Vagina (tissue), 2 donors: ENCODE measurements at regions of chr3 and their contacts with region 1.

Region 1: DNA sequence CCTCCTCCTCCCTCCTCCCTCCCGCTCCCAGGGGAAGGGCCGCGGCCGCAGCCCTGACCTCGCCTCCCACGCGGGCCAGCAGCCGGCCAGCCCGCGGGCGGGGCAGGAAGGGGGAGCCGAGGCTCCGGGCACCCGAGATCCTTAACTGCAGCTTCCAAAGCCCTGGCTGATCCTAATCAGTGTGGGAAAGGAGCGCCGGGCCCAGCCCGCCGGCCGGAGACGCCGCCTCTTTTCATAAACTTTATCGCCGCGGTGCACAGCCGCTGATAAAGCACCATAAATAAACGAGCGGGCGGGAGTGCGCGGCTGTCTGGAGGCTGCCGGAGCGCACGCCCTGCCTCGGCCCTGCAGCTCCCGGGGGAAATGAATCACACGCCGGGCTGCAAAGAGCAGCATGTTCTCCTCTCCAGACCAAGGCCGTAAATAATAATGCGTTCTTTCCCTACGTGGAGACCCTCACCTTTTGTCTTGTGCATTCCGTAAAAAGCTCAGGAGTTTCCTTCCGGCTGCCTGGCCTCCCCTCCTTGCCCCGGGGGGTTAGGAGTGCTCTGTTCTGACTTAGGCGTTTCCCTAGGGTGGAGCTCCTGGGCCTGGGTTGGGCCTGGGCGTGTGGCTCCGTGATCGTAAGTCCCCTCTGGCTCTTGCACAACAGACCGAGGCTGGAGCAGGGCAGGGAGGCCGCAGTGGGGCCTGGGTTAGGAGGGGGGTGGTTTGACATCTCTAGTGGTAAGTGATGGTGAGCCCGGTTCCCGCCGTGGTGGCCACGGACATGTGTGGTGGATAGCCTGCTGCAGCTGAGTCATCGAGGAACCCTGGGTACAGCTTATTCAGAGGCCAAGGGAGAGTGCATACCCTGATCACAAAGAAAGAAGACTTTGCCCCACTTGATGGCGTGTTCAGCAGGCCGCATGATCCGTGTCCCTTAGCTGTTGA is 132.6 kb upstream of the HES1 start:
- DNase-seq: peak in 1 of 2 donors; percentile 97
- H3K4me3 ChIP-seq: peak overlapping the region; percentile 31 to 45
- H3K27ac ChIP-seq: peak overlapping the region; percentile 63
- H3K4me1 ChIP-seq: peaks cover 13% of the 10 kb centered on the region
- H3K27me3 ChIP-seq: no peaks in the 10 kb centered on the region
- CTCF ChIP-seq: no peak
- POLR2A ChIP-seq: no peak

Region 2: GRCh38 chr3:193780810-193781472 is 222.4 kb before region 1 on chr3:
- intact Hi-C with region 1: loop called (anchors 5 kb)
- DNase-seq: peak in 1 of 2 donors; percentile 92
- H3K4me3 ChIP-seq: no peak overlapping the region
- H3K27ac ChIP-seq: peak overlapping the region; percentile 43
- H3K4me1 ChIP-seq: peaks cover 31% of the 10 kb centered on the region
- H3K27me3 ChIP-seq: no peaks in the 10 kb centered on the region
- CTCF ChIP-seq: peak; percentile 42 to 87 (median 82)
- POLR2A ChIP-seq: no peak

Region 3: GRCh38 chr3:194134757-194135528 is 131.6 kb after region 1 on chr3:
- intact Hi-C with region 1: loop called (anchors 2 kb)
- DNase-seq: peak in 1 of 2 donors; percentile 98
- H3K4me3 ChIP-seq: peak overlapping the region; percentile 54 to 63
- H3K27ac ChIP-seq: peak overlapping the region; percentile 86
- H3K4me1 ChIP-seq: peaks cover 41% of the 10 kb centered on the region
- H3K27me3 ChIP-seq: no peaks in the 10 kb centered on the region
- CTCF ChIP-seq: peak in 1 of 3 experiments; percentile 4
- POLR2A ChIP-seq: peak in 1 of 2 donors; percentile 38

Region 4: GRCh38 chr3:194184265-194184751 is 180.9 kb after region 1 on chr3:
- intact Hi-C with region 1: no loop called
- DNase-seq: no peak
- H3K4me3 ChIP-seq: no peak overlapping the region
- H3K27ac ChIP-seq: no peak overlapping the region
- H3K4me1 ChIP-seq: no peaks in the 10 kb centered on the region
- H3K27me3 ChIP-seq: no peaks in the 10 kb centered on the region
- CTCF ChIP-seq: no peak
- POLR2A ChIP-seq: no peak

Region 5: DNA sequence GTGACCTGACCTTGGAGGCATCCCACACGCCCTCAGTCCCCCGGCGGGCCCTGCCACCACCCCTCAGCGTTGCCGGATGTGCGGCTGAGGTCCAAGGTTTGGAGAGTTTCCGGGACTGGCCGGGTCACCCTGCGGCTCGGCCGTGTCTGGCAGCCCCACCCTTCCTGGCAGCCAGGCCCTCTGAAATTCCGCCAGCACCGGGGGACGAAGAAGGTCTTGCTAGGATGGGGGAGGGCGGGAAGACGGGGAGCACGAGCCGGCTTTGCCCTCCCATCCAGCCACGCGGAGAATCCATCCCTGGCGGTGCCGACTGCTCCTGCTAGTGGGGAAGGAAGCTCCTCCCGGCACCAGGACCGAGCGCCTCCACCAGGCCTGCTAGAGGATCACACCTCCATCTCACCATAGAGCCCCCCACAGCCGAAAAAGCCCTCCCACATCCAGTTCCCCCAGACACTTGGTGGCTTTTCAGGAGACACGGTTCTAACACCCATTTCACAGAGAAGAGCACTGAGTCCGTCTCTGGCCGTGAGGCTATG is 266.3 kb after region 1 on chr3:
- intact Hi-C with region 1: loop called (anchors 5 kb)
- DNase-seq: peak in 1 of 2 donors; percentile 92
- H3K4me3 ChIP-seq: no peak overlapping the region
- H3K27ac ChIP-seq: no peak overlapping the region
- H3K4me1 ChIP-seq: peaks cover 69% of the 10 kb centered on the region
- H3K27me3 ChIP-seq: no peaks in the 10 kb centered on the region
- CTCF ChIP-seq: peak in 1 of 3 experiments; percentile 26
- POLR2A ChIP-seq: no peak

Region 6: GRCh38 chr3:194315088-194315964 is 311.9 kb after region 1 on chr3:
- intact Hi-C with region 1: loop called (anchors 5 kb)
- DNase-seq: peak in 1 of 2 donors; percentile 96
- H3K4me3 ChIP-seq: peak overlapping the region; percentile 41 to 46
- H3K27ac ChIP-seq: peak overlapping the region; percentile 63
- H3K4me1 ChIP-seq: peaks cover 45% of the 10 kb centered on the region
- H3K27me3 ChIP-seq: no peaks in the 10 kb centered on the region
- CTCF ChIP-seq: peak; percentile 48 to 97 (median 90)
- POLR2A ChIP-seq: no peak

Region 7: DNA sequence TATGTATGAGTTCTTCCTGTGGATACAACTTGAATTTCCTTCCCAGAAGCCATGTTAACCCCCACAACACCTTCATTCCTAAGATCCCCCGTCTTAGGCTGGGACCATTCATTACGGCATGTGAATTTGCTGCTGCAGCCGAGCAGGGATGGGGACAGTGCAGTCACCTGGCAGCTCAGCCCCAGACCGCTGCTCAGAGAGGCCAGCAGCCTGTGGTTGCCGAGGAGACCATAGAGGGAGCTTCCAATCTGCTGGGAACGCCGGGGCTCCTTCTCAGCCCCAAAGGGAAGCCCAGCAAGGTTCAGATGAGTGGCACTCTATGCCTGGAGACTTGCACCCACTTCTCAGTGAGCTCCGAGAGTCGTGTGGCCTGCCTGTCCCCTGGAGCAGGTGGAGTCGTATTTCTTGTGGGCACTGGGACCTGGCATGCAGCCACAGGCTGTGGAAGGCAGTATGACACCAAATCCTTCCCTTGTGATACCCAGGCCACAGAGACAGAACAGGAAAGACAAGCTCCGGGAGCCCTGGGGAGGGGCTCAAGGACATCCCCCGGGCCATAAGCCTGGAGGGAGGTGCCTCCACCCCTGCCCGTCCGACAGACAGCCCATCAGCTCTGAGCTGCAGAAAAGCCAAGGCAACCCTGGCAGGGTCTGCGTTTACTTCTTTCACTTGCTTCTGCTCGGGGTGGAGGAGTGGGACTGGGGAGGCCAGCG is 849.6 kb after region 1 on chr3:
- intact Hi-C with region 1: no loop called
- DNase-seq: no peak
- H3K4me3 ChIP-seq: no peak overlapping the region
- H3K27ac ChIP-seq: no peak overlapping the region
- H3K4me1 ChIP-seq: peaks cover 24% of the 10 kb centered on the region
- H3K27me3 ChIP-seq: no peaks in the 10 kb centered on the region
- CTCF ChIP-seq: no peak
- POLR2A ChIP-seq: no peak

Region 8: DNA sequence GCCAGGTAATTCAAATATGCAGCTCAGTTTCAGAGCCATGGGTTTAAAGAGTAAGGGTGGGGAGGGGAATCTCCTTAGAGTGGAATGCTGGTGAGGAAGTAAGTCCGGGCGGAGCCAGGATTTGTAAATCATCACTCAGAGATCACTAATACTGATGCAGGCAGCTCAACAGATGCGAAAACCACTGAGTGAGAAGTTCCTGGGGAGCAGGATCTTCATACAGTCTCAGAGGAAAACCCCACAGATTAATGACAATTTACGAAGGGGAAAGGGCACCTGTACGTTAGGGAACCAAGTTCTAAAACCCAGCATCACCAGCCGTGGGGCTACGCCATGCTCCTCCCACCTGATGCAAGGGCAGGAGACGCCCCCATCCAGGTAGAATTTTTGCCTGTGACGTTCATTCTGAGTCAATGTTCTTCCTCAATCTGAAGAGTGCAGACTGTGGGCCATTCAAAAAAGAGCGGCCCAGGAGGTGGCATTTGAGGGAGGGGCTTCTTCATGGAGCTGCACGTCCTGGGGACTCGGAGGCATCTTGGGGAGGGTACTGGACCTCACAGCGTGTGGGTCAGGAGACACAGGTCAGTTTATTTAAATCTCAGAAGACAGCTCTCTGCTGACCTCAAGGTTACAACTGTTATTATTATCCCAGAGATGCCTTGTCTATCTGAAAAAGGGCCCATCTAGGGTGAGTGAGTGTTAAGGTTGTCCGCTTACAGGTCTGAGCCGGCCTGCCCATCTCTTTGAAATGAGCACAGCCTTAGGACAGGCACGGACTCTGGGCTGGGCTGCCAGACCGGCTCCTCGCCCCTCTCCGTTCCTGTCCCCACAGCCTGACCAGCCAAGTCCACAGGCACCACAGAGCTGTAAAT is 1039.6 kb after region 1 on chr3:
- intact Hi-C with region 1: no loop called
- DNase-seq: no peak
- H3K4me3 ChIP-seq: no peak overlapping the region
- H3K27ac ChIP-seq: no peak overlapping the region
- H3K4me1 ChIP-seq: no peaks in the 10 kb centered on the region
- H3K27me3 ChIP-seq: no peaks in the 10 kb centered on the region
- CTCF ChIP-seq: no peak
- POLR2A ChIP-seq: no peak